ENCODE measurements at regions of chr5 and their contacts with region 1.

Region 1: GRCh38 chr5:115634343-115635132 is 8.7 kb upstream of the TMED7 start:
- DNase-seq: peak; percentile 75
- H3K4me3 Mint-ChIP-seq: peak overlapping the region; percentile 33
- H3K27ac Mint-ChIP-seq: no peak overlapping the region
- H3K4me1 Mint-ChIP-seq: peaks cover 41% of the 10 kb centered on the region
- H3K27me3 Mint-ChIP-seq: peaks cover 57% of the 10 kb centered on the region

Region 2: GRCh38 chr5:115720888-115721287 is 86.3 kb after region 1 on chr5:
- intact Hi-C with region 1: no loop called
- DNase-seq: no peak
- H3K4me3 Mint-ChIP-seq: no peak overlapping the region
- H3K27ac Mint-ChIP-seq: no peak overlapping the region
- H3K4me1 Mint-ChIP-seq: no peaks in the 10 kb centered on the region
- H3K27me3 Mint-ChIP-seq: peaks cover 14% of the 10 kb centered on the region

Region 3: DNA sequence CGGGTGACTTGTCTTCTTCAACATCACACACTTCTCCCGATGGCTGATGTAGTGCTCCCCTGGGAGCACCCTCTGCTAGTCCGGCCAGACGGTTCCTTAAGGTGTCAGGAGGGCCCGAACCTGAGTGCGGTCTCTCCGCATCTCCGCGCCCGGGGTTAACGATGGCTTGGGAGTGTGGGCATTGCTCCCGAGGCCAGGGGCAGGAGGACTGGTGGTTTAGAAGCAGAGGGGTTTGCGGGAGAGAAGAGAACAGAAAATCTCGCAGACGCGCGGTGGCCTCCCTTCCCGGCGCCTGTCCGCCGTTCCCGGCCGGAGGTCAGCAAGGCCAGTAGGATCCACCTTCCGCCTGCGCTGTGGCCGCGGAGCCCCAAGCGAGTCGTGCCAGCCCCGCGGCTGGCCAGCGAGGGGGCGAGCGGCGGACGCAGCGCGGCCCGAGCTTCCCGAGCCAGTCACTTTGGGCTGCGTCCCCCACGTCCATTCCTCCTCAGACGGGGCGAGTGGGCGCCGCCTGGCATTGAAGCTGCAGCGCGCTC is 181.2 kb after region 1 on chr5:
- intact Hi-C with region 1: loop called (anchors 2 kb)
- DNase-seq: no peak
- H3K4me3 Mint-ChIP-seq: peak overlapping the region; percentile 58
- H3K27ac Mint-ChIP-seq: no peak overlapping the region
- H3K4me1 Mint-ChIP-seq: peaks cover 26% of the 10 kb centered on the region
- H3K27me3 Mint-ChIP-seq: peaks cover 84% of the 10 kb centered on the region

Region 4: GRCh38 chr5:115869256-115869655 is 234.7 kb after region 1 on chr5:
- intact Hi-C with region 1: no loop called
- DNase-seq: no peak
- H3K4me3 Mint-ChIP-seq: no peak overlapping the region
- H3K27ac Mint-ChIP-seq: no peak overlapping the region
- H3K4me1 Mint-ChIP-seq: peaks cover 15% of the 10 kb centered on the region
- H3K27me3 Mint-ChIP-seq: no peaks in the 10 kb centered on the region

Region 5: DNA sequence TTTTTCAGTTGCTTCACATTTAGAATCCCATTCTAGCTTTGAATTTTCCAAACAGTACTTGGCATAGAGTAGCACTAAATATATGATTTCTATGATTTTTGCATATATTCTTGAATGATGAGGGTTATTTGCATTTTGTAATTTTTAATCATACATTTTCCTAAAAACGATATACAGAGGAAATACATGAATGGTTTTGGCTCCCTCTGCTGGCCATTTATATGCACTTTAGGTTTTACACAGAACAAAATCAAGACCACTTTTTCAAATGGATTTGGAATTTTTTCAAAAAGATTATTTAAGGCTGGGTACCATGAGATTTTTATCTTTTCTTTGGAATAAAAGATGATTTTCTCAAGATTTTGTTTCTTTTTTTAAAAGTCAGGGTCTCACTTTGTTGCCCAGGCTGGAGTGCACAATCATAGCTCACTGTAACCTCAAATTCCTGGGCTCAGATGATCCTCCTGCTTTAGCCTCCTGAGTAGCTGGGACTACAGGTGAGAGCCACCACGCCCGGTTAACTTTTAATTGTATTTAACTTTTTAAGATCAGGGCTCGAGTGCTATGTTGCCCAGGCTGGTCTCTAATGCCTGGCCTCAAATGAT is 433.6 kb after region 1 on chr5:
- intact Hi-C with region 1: loop called (anchors 1 kb)
- DNase-seq: no peak
- H3K4me3 Mint-ChIP-seq: no peak overlapping the region
- H3K27ac Mint-ChIP-seq: no peak overlapping the region
- H3K4me1 Mint-ChIP-seq: no peaks in the 10 kb centered on the region
- H3K27me3 Mint-ChIP-seq: peaks cover 55% of the 10 kb centered on the region

Region 6: DNA sequence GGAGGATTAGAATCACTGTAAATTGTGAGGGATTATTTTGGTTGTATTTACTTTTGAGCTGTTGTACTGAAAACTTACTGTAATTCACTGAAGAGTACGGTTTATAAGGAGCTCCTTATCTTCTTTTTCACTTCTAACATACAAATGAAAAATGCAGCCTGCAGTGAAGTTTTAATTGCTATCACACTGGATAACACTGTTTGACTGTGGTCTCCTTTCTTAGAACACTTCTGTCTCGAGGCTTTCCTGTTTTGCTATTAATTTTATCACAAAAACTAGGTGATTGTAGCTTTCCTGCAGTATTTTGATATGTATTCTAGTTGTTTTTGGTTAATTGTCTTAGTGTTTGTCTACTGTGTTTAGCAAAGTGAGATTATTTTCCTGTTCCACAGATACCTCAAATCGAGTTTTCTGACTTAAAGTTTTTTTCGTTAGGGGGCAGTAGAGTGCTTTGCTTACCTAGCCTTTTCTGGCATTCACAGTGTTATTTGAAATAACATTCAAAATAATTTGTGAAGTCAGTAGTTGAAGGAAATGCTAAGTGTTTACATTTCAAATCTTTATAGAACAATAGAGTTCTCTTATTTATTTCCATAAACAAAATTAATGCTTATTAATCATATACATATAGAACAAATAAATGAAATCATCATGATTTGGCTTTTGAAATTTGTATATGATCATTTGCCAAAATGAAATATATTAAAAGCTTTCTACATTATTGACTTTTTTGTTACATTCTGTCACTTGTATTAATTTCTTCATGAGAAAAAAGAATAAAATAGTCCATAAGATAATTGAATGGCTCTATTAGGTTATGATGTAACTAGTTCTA is 503.2 kb after region 1 on chr5:
- intact Hi-C with region 1: loop called (anchors 1 kb)
- DNase-seq: no peak
- H3K4me3 Mint-ChIP-seq: no peak overlapping the region
- H3K27ac Mint-ChIP-seq: no peak overlapping the region
- H3K4me1 Mint-ChIP-seq: peaks cover 21% of the 10 kb centered on the region
- H3K27me3 Mint-ChIP-seq: no peaks in the 10 kb centered on the region